ENCODE measurements at regions of chr5 and their contacts with region 1.

Region 1: GRCh38 chr5:58460732-58461286 is 923 bp upstream of the PLK2 start:
- DNase-seq: peak; percentile 80 to 94 (median 89)
- ATAC-seq: peak; percentile 69
- H3K4me3 ChIP-seq: peak overlapping the region; percentile 93
- H3K4me3 Mint-ChIP-seq: peak overlapping the region; percentile 92
- H3K27ac ChIP-seq: peak overlapping the region; percentile 74 to 79
- H3K27ac Mint-ChIP-seq: peak overlapping the region; percentile 76
- H3K4me1 ChIP-seq: peaks cover 24% of the 10 kb centered on the region
- H3K4me1 Mint-ChIP-seq: peaks cover 17% of the 10 kb centered on the region
- H3K27me3 ChIP-seq: peaks cover 0 to 5% of the 10 kb centered on the region in 2 experiments
- H3K27me3 Mint-ChIP-seq: peaks cover 17% of the 10 kb centered on the region
- CTCF ChIP-seq: peak; percentile 80

Region 2: GRCh38 chr5:56909294-56910209 is 1551.3 kb before region 1 on chr5 and contains the start of gene SETD9:
- CTCF ChIA-PET with region 1: no interaction called
- POLR2A ChIA-PET with region 1: interaction called, 3 read pairs
- intact Hi-C with region 1: loop called in 1 of 2 experiments (anchors 2 kb)
- DNase-seq: peak; percentile 65 to 95 (median 80)
- ATAC-seq: peak; percentile 84
- H3K4me3 ChIP-seq: peak within 1 kb of the TSS; percentile 88
- H3K4me3 Mint-ChIP-seq: peak within 1 kb of the TSS; percentile 95
- H3K27ac ChIP-seq: peak within 1 kb of the TSS; percentile 57 to 82
- H3K27ac Mint-ChIP-seq: peak within 1 kb of the TSS; percentile 81
- H3K4me1 ChIP-seq: peaks cover 15% of the 10 kb centered on the region
- H3K4me1 Mint-ChIP-seq: peaks cover 24% of the 10 kb centered on the region
- H3K27me3 ChIP-seq: no peaks in the 10 kb centered on the region
- H3K27me3 Mint-ChIP-seq: no peaks in the 10 kb centered on the region
- CTCF ChIP-seq: no peak
- total RNA-seq, gene SETD9: 1.6 to 2.3 TPM

Region 3: GRCh38 chr5:57221049-57221568 is 1239.7 kb before region 1 on chr5:
- CTCF ChIA-PET with region 1: no interaction called
- POLR2A ChIA-PET with region 1: no interaction called
- intact Hi-C with region 1: loop called in 1 of 2 experiments (anchors 5 kb)
- DNase-seq: peak in 5 of 14 experiments; percentile 9 to 86 (median 78)
- ATAC-seq: peak; percentile 85
- H3K4me3 ChIP-seq: no peak overlapping the region
- H3K4me3 Mint-ChIP-seq: no peak overlapping the region
- H3K27ac ChIP-seq: no peak overlapping the region
- H3K27ac Mint-ChIP-seq: peak overlapping the region; percentile 59
- H3K4me1 ChIP-seq: peaks cover 14% of the 10 kb centered on the region
- H3K4me1 Mint-ChIP-seq: peaks cover 68% of the 10 kb centered on the region
- H3K27me3 ChIP-seq: no peaks in the 10 kb centered on the region
- H3K27me3 Mint-ChIP-seq: no peaks in the 10 kb centered on the region
- CTCF ChIP-seq: peak; percentile 95

Region 4: GRCh38 chr5:57416249-57416994 is 1044.4 kb before region 1 on chr5:
- CTCF ChIA-PET with region 1: no interaction called
- POLR2A ChIA-PET with region 1: no interaction called
- intact Hi-C with region 1: loop called in 1 of 2 experiments (anchors 10 kb)
- DNase-seq: no peak
- ATAC-seq: no peak
- H3K4me3 ChIP-seq: no peak overlapping the region
- H3K4me3 Mint-ChIP-seq: no peak overlapping the region
- H3K27ac ChIP-seq: no peak overlapping the region
- H3K27ac Mint-ChIP-seq: no peak overlapping the region
- H3K4me1 ChIP-seq: no peaks in the 10 kb centered on the region
- H3K4me1 Mint-ChIP-seq: no peaks in the 10 kb centered on the region
- H3K27me3 ChIP-seq: no peaks in the 10 kb centered on the region
- H3K27me3 Mint-ChIP-seq: no peaks in the 10 kb centered on the region
- CTCF ChIP-seq: no peak

Region 5: GRCh38 chr5:57650360-57651069 is 810.3 kb before region 1 on chr5:
- CTCF ChIA-PET with region 1: no interaction called
- POLR2A ChIA-PET with region 1: interaction called, 4 read pairs
- intact Hi-C with region 1: loop called (anchors 2 kb)
- DNase-seq: peak in 5 of 14 experiments; percentile 1 to 37 (median 30)
- ATAC-seq: no peak
- H3K4me3 ChIP-seq: no peak overlapping the region
- H3K4me3 Mint-ChIP-seq: no peak overlapping the region
- H3K27ac ChIP-seq: no peak overlapping the region
- H3K27ac Mint-ChIP-seq: no peak overlapping the region
- H3K4me1 ChIP-seq: no peaks in the 10 kb centered on the region
- H3K4me1 Mint-ChIP-seq: no peaks in the 10 kb centered on the region
- H3K27me3 ChIP-seq: no peaks in the 10 kb centered on the region
- H3K27me3 Mint-ChIP-seq: peaks cover 15% of the 10 kb centered on the region
- CTCF ChIP-seq: peak; percentile 64

Region 6: DNA sequence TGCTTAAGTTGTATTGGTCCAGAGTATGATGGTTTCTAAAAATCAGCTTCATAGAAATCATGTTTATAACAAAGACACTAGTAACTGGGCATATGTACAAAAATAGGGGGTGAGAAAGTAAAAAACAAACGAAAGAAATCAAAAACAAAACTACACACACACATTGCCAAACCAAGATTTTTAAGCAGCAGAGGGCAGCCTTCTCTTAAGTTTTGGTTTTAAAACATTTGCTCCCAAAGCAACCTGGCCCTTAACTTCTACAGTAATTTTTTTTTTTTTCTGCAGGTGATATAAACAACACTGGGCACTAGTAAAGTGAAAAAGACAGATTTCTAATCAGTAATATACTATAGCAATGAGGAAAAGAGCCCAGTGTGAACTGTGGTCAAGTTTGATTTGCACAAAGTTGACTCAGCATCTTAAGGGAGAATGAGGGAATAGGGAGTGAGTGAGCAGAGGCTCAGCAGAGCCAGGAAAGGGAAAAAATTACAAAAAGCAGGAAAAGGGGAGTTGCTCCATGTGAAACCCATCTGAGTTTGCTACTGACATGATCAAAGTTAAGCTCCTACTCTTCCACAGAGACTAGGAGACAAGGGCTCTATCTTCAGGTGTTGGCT is 17.1 kb after region 1 on chr5:
- CTCF ChIA-PET with region 1: no interaction called
- POLR2A ChIA-PET with region 1: no interaction called
- intact Hi-C with region 1: no loop called
- DNase-seq: no peak
- ATAC-seq: no peak
- H3K4me3 ChIP-seq: no peak overlapping the region
- H3K4me3 Mint-ChIP-seq: no peak overlapping the region
- H3K27ac ChIP-seq: no peak overlapping the region
- H3K27ac Mint-ChIP-seq: no peak overlapping the region
- H3K4me1 ChIP-seq: no peaks in the 10 kb centered on the region
- H3K4me1 Mint-ChIP-seq: no peaks in the 10 kb centered on the region
- H3K27me3 ChIP-seq: peaks cover 0 to 2% of the 10 kb centered on the region in 2 experiments
- H3K27me3 Mint-ChIP-seq: no peaks in the 10 kb centered on the region
- CTCF ChIP-seq: no peak